ENCODE measurements at regions of chrX and their contacts with region 1.

Region 1: GRCh38 chrX:129925305-129926092 is 19.5 kb downstream of the UTP14A start:
- DNase-seq: peak; percentile 42
- H3K4me3 ChIP-seq: no peak overlapping the region
- H3K27ac ChIP-seq: no peak overlapping the region
- H3K4me1 ChIP-seq: no peaks in the 10 kb centered on the region
- H3K27me3 ChIP-seq: no peaks in the 10 kb centered on the region
- CTCF ChIP-seq: peak in 3 of 4 experiments; percentile 50 to 64 (median 62)
- POLR2A ChIP-seq: no peak

Region 2: GRCh38 chrX:129759576-129760061 is 165.9 kb before region 1 on chrX:
- intact Hi-C with region 1: no loop called
- DNase-seq: peak; percentile 33
- H3K4me3 ChIP-seq: no peak overlapping the region
- H3K27ac ChIP-seq: no peak overlapping the region
- H3K4me1 ChIP-seq: no peaks in the 10 kb centered on the region
- H3K27me3 ChIP-seq: no peaks in the 10 kb centered on the region
- CTCF ChIP-seq: peak in 1 of 4 experiments; percentile 14
- POLR2A ChIP-seq: no peak

Region 3: GRCh38 chrX:130060122-130061069 is 134.9 kb after region 1 on chrX:
- intact Hi-C with region 1: loop called (anchors 2 kb)
- DNase-seq: peak; percentile 49
- H3K4me3 ChIP-seq: peak overlapping the region; percentile 42
- H3K27ac ChIP-seq: peak overlapping the region; percentile 50 to 66
- H3K4me1 ChIP-seq: no peaks in the 10 kb centered on the region
- H3K27me3 ChIP-seq: no peaks in the 10 kb centered on the region
- CTCF ChIP-seq: peak; percentile 77 to 91 (median 86)
- POLR2A ChIP-seq: no peak

Measured in prostate gland (tissue), 2 donors.